ENCODE measurements at regions of chr19 and their contacts with region 1.

Region 1: GRCh38 chr19:58519355-58520256 is at the start of gene ZBTB45:
- DNase-seq: peak; percentile 97
- H3K4me3 Mint-ChIP-seq: peak within 1 kb of the TSS; percentile 93
- H3K27ac Mint-ChIP-seq: peak within 1 kb of the TSS; percentile 97
- H3K4me1 Mint-ChIP-seq: peaks cover 37% of the 10 kb centered on the region
- H3K27me3 Mint-ChIP-seq: no peaks in the 10 kb centered on the region
- total RNA-seq, gene ZBTB45: 16.8 and 17.5 TPM in 2 replicates

Region 2: DNA sequence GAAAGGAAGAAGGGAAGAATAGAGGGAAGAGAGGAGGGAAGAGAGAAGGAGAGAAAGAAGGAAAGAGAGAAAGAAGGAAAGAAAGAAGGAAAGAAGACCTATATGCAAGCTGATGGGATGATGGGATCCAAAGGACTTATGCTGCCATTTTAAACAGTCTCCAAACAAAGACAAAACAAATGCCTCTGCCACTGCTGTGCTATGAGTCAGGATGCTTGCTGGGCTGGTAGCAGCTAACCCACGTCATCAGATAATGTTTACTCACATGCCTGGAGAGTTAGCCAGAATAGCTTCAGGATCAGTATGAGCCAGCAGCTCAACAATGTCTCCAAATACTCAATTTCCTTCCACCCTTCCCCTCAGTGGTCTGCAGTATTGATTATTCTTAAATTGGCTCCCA is 348.7 kb before region 1 on chr19:
- intact Hi-C with region 1: no loop called
- DNase-seq: no peak
- H3K4me3 Mint-ChIP-seq: no peak overlapping the region
- H3K27ac Mint-ChIP-seq: no peak overlapping the region
- H3K4me1 Mint-ChIP-seq: no peaks in the 10 kb centered on the region
- H3K27me3 Mint-ChIP-seq: no peaks in the 10 kb centered on the region

Region 3: GRCh38 chr19:58182989-58183816 is 336.4 kb before region 1 on chr19 and contains the start of gene ZNF274:
- intact Hi-C with region 1: loop called (anchors 2 kb)
- DNase-seq: peak; percentile 98
- H3K4me3 Mint-ChIP-seq: peak within 1 kb of the TSS; percentile 97
- H3K27ac Mint-ChIP-seq: peak within 1 kb of the TSS; percentile 96
- H3K4me1 Mint-ChIP-seq: peaks cover 13% of the 10 kb centered on the region
- H3K27me3 Mint-ChIP-seq: no peaks in the 10 kb centered on the region
- total RNA-seq, gene ZNF274: 19.4 and 19.8 TPM in 2 replicates

Region 4: GRCh38 chr19:58386576-58387337 is 132.8 kb before region 1 on chr19 and contains the start of gene RPS5:
- intact Hi-C with region 1: loop called (anchors 2 kb)
- DNase-seq: peak; percentile 98
- H3K4me3 Mint-ChIP-seq: peak within 1 kb of the TSS; percentile 97
- H3K27ac Mint-ChIP-seq: peak within 1 kb of the TSS; percentile 97
- H3K4me1 Mint-ChIP-seq: peaks cover 35% of the 10 kb centered on the region
- H3K27me3 Mint-ChIP-seq: no peaks in the 10 kb centered on the region
- total RNA-seq, gene RPS5: 1,286 and 1,288 TPM in 2 replicates

Region 5: DNA sequence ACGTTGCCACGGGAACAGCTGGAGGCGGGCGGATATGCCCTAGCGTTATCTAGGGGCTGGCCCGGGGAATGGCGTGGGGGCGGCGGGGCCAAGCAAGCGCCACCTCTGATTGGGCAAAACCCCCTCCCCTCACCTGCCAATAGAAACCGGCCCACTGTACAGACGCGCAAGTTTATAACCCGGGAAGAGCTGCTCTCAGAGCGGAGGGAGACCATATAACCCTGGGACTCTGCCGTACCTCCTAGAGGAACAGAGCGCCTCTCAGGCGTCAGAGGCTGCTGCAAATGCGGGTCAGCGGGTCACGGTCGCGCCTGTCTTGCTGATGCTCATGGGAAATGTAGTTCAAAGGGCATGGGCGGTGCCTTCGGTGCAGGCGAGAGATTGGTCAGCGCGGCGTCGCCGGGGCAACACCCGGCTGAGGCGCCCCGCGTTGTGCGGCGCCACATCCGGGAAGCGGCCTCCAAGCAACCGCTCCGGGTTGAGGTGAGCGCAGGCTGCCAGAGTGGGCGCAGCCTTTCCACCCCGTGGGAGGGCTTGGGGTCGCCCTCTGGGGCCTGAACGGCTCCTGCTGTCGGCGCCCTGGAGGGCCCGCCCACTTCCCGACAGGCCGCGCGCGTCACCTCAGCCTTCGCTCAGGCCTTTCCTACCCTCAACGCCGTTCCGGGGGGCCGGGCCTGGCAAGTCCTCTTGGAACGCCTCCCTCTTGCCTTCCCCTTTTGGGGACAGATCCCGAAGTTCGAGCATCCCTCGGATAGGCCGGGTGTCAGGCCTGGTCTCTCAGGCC is 43.7 kb before region 1 on chr19 and contains the start of gene ZNF446:
- intact Hi-C with region 1: loop called (anchors 1 kb)
- DNase-seq: peak; percentile 99
- H3K4me3 Mint-ChIP-seq: peak within 1 kb of the TSS; percentile 93
- H3K27ac Mint-ChIP-seq: peak within 1 kb of the TSS; percentile 97
- H3K4me1 Mint-ChIP-seq: peaks cover 19% of the 10 kb centered on the region
- H3K27me3 Mint-ChIP-seq: no peaks in the 10 kb centered on the region
- total RNA-seq, gene ZNF446: 6.3 and 6.8 TPM in 2 replicates

Region 6: GRCh38 chr19:58572818-58573657 is 53.4 kb after region 1 on chr19 and contains the start of gene MZF1:
- intact Hi-C with region 1: loop called (anchors 1 kb)
- DNase-seq: peak; percentile 100
- H3K4me3 Mint-ChIP-seq: peak within 1 kb of the TSS; percentile 95
- H3K27ac Mint-ChIP-seq: peak within 1 kb of the TSS; percentile 99
- H3K4me1 Mint-ChIP-seq: peaks cover 37% of the 10 kb centered on the region
- H3K27me3 Mint-ChIP-seq: peaks cover 3% of the 10 kb centered on the region
- total RNA-seq, gene MZF1: 21.6 and 23.7 TPM in 2 replicates